Left lung (tissue), 14 donors: ENCODE measurements at regions of chr6 and their contacts with region 1.

Region 1: GRCh38 chr6:108113557-108114519 is 39.3 kb upstream of the OSTM1 start:
- DNase-seq: peak in 1 of 4 donors; percentile 68
- ATAC-seq: peak; percentile 48
- H3K4me3 ChIP-seq: peak overlapping the region in 1 of 2 donors; percentile 32
- H3K27ac ChIP-seq: no peak overlapping the region
- H3K4me1 ChIP-seq: peaks cover 14 to 48% of the 10 kb centered on the region in 2 donors
- H3K27me3 ChIP-seq: peaks cover 32 to 95% of the 10 kb centered on the region in 2 donors
- CTCF ChIP-seq: no peak

Region 2: GRCh38 chr6:108052706-108053105 is 61.1 kb before region 1 on chr6:
- intact Hi-C with region 1: no loop called
- DNase-seq: no peak
- ATAC-seq: no peak
- H3K4me3 ChIP-seq: no peak overlapping the region
- H3K27ac ChIP-seq: no peak overlapping the region
- H3K4me1 ChIP-seq: no peaks in the 10 kb centered on the region
- H3K27me3 ChIP-seq: no peaks in the 10 kb centered on the region
- CTCF ChIP-seq: no peak

Region 3: DNA sequence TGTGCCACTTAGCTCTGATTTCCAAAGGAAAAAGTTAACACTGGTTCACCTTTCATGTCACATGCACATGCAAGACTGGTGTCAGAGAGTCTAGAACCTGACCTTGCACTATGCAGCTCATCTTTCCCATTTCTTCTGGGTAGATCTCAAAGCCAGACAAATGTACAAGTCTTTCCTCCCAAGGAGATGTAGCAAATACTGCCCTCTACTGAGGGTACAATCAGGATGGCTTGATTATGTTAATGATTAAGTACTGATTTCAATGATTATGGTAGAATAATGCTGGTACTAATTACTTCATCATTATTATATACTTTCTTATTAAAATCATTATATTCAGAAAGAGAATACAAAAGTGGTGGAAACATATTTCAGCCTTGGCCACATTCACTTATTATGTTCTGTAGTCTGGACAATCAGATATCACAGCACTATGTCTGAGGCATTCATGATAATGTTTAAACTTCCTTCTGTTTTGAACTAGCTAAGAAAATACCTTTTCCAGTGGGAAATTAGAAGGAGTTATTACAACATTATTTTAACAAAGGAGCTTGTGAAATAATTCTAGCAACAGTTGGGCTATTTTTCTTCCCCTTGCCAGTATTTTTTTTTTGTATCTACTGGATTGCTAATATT is 378.4 kb after region 1 on chr6:
- intact Hi-C with region 1: loop called in 1 of 2 experiments (anchors 5 kb)
- DNase-seq: peak in 2 of 4 donors; percentile 20 to 46
- ATAC-seq: peak; percentile 86
- H3K4me3 ChIP-seq: no peak overlapping the region
- H3K27ac ChIP-seq: no peak overlapping the region
- H3K4me1 ChIP-seq: no peaks in the 10 kb centered on the region
- H3K27me3 ChIP-seq: no peaks in the 10 kb centered on the region
- CTCF ChIP-seq: peak; percentile 14 to 44

Region 4: GRCh38 chr6:108526739-108527174 is 412.9 kb after region 1 on chr6:
- intact Hi-C with region 1: loop called in 1 of 2 experiments (anchors 10 kb)
- DNase-seq: peak in 2 of 4 donors; percentile 34 to 55
- ATAC-seq: peak; percentile 86
- H3K4me3 ChIP-seq: no peak overlapping the region
- H3K27ac ChIP-seq: no peak overlapping the region
- H3K4me1 ChIP-seq: no peaks in the 10 kb centered on the region
- H3K27me3 ChIP-seq: no peaks in the 10 kb centered on the region
- CTCF ChIP-seq: peak; percentile 60 to 66